Dendritic cell treated with granulocyte-macrophage colony-stimulating factor and Interleukin-4, amounts not matched to agents 40 ng/mL and 50 ng/mL, for 4 days (primary cell): ENCODE measurements at regions of chr9 and their contacts with region 1.

Region 1: GRCh38 chr9:37746848-37747753 is 6.5 kb upstream of the TRMT10B start:
- H3K4me3 Mint-ChIP-seq: no peak overlapping the region
- H3K27ac Mint-ChIP-seq: no peak overlapping the region
- H3K4me1 Mint-ChIP-seq: no peaks in the 10 kb centered on the region
- H3K27me3 Mint-ChIP-seq: no peaks in the 10 kb centered on the region

Region 2: GRCh38 chr9:37503736-37504135 is 243.4 kb before region 1 on chr9:
- intact Hi-C with region 1: no loop called
- H3K4me3 Mint-ChIP-seq: no peak overlapping the region
- H3K27ac Mint-ChIP-seq: no peak overlapping the region
- H3K4me1 Mint-ChIP-seq: peaks cover 6% of the 10 kb centered on the region
- H3K27me3 Mint-ChIP-seq: no peaks in the 10 kb centered on the region

Region 3: DNA sequence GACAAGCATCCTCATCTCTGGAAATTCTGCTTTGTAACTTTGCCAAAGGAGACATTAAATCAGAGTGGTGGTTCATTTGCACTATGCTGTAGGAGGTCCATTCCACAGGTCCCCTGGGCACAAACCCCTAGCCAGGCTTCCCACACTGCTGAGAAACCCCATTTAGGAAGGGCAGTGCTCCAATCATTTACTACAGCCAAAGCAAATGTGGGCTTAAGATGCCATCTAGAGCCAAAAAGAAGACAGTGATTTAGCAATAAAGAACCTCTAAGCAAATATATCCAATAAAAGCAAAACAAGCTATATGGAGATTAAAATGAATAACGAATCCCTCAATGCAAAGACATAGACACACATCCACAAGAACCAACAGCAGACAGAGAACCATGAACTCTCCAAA is 516.4 kb after region 1 on chr9:
- intact Hi-C with region 1: loop called (anchors 5 kb)
- H3K4me3 Mint-ChIP-seq: no peak overlapping the region
- H3K27ac Mint-ChIP-seq: no peak overlapping the region
- H3K4me1 Mint-ChIP-seq: no peaks in the 10 kb centered on the region
- H3K27me3 Mint-ChIP-seq: peaks cover 2% of the 10 kb centered on the region

Region 4: DNA sequence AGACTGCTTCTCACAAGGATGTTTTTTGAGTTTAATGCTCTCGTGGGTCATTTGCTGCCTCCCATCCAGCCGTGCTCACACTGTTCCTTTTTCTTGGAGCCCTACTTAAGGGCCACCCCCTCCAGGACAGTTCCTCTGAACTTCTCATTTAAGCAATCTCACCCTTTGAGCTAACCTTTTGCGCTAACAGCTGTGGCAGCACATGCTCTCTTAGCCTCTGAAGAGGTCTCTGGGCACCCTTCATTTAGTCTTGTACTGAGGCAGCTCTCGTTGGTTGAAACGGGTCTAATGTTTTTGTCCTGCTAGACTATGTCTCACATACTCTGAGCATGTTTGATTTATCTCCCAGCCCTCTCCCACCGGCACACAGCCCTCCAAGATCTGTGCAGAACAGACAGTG is 657.2 kb after region 1 on chr9:
- intact Hi-C with region 1: loop called (anchors 5 kb)
- H3K4me3 Mint-ChIP-seq: no peak overlapping the region
- H3K27ac Mint-ChIP-seq: no peak overlapping the region
- H3K4me1 Mint-ChIP-seq: peaks cover 5% of the 10 kb centered on the region
- H3K27me3 Mint-ChIP-seq: peaks cover 13% of the 10 kb centered on the region